WTC11 (cell line): ENCODE measurements at regions of chr17 and their contacts with region 1.

Region 1: GRCh38 chr17:47276868-47277267 is 23.2 kb downstream of the ITGB3 start:
- DNase-seq: peak; percentile 42
- ATAC-seq: peak; percentile 51
- H3K4me3 Mint-ChIP-seq: no peak overlapping the region
- H3K27ac Mint-ChIP-seq: peak overlapping the region; percentile 20
- H3K4me1 Mint-ChIP-seq: peaks cover 44% of the 10 kb centered on the region
- H3K27me3 Mint-ChIP-seq: no peaks in the 10 kb centered on the region; the same call in 1 of the 2 replicates
- CTCF ChIP-seq: no peak

Region 2: DNA sequence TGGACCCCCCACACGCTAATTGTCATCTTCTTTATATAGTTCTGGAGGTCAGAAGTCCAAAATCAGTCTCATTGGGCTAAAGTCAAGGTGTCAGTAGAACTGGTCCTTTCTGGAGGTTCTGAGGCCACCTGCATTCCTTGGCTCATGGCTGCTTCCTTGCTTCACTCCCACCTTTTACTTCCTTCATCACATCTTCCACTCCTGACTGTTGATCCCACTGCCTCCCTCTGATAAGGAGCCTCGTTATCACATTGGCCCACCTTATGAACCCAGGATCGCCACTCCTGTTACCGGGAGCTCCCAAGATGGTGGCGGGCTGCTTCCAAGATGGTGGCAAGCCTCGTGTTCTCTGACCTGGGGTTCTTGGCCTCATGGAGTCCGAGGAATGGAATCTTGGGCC is 170.7 kb before region 1 on chr17:
- CTCF ChIA-PET with region 1: no interaction called
- POLR2A ChIA-PET with region 1: no interaction called
- DNase-seq: no peak
- ATAC-seq: no peak
- H3K4me3 Mint-ChIP-seq: no peak overlapping the region
- H3K27ac Mint-ChIP-seq: no peak overlapping the region
- H3K4me1 Mint-ChIP-seq: no peaks in the 10 kb centered on the region
- H3K27me3 Mint-ChIP-seq: peaks cover 4% of the 10 kb centered on the region; the same call in 1 of the 2 replicates
- CTCF ChIP-seq: no peak

Region 3: GRCh38 chr17:47253541-47254402 is 23.1 kb before region 1 on chr17 and contains the start of gene ITGB3:
- CTCF ChIA-PET with region 1: interaction called, 11 read pairs
- POLR2A ChIA-PET with region 1: no interaction called
- DNase-seq: peak; percentile 81
- ATAC-seq: peak; percentile 88
- H3K4me3 Mint-ChIP-seq: peak within 1 kb of the TSS; percentile 99
- H3K27ac Mint-ChIP-seq: no peak within 1 kb of the TSS
- H3K4me1 Mint-ChIP-seq: peaks cover 50% of the 10 kb centered on the region
- H3K27me3 Mint-ChIP-seq: peaks cover 61% of the 10 kb centered on the region
- CTCF ChIP-seq: no peak
- total RNA-seq, gene ITGB3: 0.04 to 0.14 TPM (median 0.09 TPM) in 3 replicates

Region 4: DNA sequence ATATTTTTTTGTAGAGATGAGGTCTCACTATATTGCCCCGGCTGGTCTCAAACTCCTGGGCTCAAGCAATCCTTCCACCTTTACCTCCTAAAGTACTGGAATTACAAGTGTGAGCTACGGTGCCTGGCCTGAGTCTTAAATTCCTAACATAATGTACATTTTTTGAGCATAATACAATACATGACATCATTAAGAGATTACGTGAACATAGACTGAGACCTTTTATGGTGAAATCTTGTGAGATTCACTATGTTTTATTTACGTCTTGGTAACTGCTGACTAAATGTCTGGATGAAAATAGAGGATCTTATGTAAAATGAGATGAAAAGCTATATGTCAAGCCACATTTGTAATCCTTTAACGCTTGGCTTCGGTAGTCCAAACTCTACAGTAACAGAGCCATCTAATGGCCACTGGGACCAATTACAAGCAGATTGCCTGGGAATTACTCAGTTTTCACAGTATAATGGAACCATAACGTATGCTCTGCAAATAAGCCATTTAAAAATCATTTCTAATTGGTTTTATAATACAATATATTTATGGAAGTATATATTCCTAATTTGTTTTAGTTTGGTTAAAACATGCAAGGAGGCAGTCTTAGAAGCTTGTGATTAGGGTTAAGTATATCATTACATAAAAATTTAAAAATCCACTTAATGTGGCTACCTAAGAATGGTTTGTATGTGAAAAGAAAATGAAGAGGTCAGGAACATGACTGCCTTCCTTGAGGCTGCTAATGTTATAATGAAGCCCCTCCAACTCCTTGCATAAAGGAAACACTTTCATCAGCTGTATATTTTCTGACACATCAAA is 38.8 kb after region 1 on chr17:
- CTCF ChIA-PET with region 1: interaction called, 14 read pairs
- POLR2A ChIA-PET with region 1: no interaction called
- DNase-seq: no peak
- ATAC-seq: peak; percentile 81
- H3K4me3 Mint-ChIP-seq: no peak overlapping the region
- H3K27ac Mint-ChIP-seq: no peak overlapping the region
- H3K4me1 Mint-ChIP-seq: 0 out of 2 replicates have a peak, but pooled peaks cover 2% of the 10 kb centered on the region
- H3K27me3 Mint-ChIP-seq: peaks cover 1% of the 10 kb centered on the region; the same call in 1 of the 2 replicates
- CTCF ChIP-seq: peak; percentile 57; the same call in 1 of the 2 replicates